Sigmoid colon (tissue), 7 donors: ENCODE measurements at regions of chr2 and their contacts with region 1.

Region 1: DNA sequence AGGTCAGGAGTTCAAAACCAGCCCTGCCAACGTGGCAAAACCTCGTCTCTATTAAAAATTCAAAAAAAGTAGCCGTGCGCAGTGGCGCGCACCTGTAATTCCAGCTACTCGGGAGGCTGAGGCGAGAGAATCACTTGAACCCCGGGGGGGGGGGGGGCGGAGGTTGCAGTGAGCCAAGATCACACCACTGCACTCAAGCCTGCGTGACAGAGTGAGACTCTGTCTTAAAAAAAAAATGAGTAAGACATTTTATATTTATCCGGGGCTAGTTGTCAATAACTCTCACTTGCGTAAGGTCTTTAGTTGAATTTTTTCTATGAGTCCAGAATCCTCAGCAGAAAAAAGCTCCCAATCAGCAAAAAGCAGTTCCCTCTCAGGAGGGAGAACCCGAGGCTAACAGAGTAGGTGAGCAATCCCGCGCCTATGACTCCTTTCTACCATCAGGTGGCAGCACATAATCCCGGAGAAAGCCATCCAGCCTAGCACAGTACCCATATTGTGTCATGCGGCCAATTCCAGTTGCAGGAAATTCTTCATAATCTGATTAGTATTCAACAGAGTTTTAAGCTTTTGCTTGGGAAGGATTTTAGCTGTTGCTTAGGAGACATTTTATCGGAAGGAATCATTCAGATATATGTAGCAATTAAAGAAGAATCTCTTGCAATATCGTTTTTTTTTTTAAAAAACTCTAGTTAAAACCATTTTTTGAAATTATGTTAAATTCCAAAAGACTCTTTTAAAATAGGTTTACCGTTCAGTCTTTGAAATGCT is 11.9 kb upstream of the CRYGA start:
- DNase-seq: peak; percentile 84
- H3K4me3 ChIP-seq: no peak overlapping the region
- H3K27ac ChIP-seq: no peak overlapping the region
- H3K4me1 ChIP-seq: peaks cover 0 to 7% (median 0%) of the 10 kb centered on the region in 4 donors
- H3K27me3 ChIP-seq: no peaks in the 10 kb centered on the region
- CTCF ChIP-seq: peak in 3 of 4 experiments; percentile 67 to 81 (median 70)
- EP300 ChIP-seq: no peak
- POLR2A ChIP-seq: no peak

Region 2: DNA sequence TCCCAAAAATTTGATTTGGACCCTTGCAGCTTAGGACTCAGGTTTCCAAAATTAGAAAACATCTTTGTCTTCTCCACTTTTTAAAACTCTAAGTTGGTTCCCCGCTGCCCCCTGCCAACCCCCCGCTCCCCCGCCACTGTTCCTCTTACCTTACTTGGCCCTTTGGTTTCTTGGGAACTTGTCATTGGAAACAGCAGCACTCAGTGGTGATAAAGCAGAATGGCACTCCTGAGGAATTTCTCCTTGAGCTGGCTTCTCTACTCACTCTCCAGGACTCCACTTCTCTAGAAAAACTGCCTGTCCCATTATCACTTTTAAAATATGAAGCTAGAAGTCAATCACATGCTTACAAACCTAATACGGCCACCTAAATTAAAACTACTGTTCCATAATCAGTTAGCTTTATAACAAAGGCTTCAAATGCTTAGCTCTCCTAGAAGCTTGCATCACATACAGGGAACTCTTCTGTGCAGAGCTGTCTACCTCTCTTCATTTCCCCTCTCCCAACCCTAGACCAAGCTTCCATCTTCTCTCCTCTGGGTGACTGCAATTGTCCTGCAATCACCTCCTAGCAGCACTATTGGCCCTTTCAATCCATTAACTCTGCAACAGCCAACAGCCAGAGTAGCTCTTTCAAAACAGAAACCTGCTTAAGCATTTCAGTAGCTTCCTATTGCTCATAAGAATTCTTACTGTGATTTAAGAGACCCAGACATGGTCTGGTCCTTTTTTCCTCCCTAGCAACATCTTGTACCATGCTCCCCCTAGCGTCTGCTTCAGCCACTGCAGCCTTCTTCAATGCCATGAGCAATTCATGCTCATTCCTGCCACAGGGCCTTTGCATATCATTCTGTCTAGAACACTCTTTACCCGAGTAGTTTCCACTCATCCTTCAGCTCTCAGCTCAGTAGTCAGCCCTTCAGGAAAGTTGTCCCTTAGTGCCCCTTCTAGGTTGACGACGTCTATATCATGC is 134.8 kb before region 1 on chr2:
- intact Hi-C with region 1: no loop called
- DNase-seq: peak; percentile 83
- H3K4me3 ChIP-seq: peak overlapping the region in 3 of 4 donors; percentile 1 to 18 (median 7)
- H3K27ac ChIP-seq: peak overlapping the region in 3 of 4 donors; percentile 67 to 77 (median 77)
- H3K4me1 ChIP-seq: peaks cover 0 to 14% (median 0%) of the 10 kb centered on the region in 4 donors
- H3K27me3 ChIP-seq: no peaks in the 10 kb centered on the region
- CTCF ChIP-seq: peak; percentile 56 to 75 (median 68)
- EP300 ChIP-seq: no peak
- POLR2A ChIP-seq: no peak

Region 3: DNA sequence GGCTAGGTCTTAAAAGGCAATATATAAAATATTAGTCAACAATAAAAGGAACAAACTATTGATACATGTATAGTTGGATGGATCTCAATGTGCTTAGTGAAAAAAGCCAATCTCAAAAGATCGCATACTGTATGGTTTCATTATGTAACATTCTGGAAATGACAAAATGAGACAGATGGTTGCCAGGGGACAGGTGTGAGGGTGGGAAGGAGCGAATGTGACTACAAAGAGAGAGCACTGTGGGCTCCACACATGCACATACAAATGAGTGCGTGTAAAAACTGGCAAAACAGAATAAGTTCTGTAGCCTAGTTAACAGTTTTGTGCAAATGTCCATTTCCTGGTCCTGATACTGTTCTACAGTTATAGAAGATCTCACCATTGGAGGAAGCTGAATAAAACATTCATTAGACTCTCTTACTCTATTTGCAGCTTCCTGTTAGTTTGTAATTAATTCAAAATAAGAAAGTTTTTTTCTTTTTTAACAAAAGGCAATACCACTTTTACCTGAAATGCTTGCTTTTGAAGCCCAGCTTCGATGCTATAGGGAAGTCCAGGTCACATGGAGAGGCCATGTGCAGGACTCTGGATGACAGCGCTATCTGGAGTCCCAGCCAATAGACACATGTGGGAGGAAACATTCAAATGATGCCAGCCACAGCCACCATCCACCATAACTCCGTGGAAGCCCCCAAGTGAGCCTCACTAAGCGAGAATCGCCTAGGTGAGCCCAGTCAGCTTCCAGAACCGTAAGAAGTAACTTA is 35.6 kb after region 1 on chr2:
- intact Hi-C with region 1: no loop called
- DNase-seq: no peak
- H3K4me3 ChIP-seq: no peak overlapping the region
- H3K27ac ChIP-seq: no peak overlapping the region
- H3K4me1 ChIP-seq: no peaks in the 10 kb centered on the region
- H3K27me3 ChIP-seq: no peaks in the 10 kb centered on the region
- CTCF ChIP-seq: no peak
- EP300 ChIP-seq: no peak
- POLR2A ChIP-seq: no peak

Region 4: GRCh38 chr2:208254871-208255556 is 79.8 kb after region 1 on chr2 and contains the start of gene IDH1:
- intact Hi-C with region 1: loop called (anchors 2 kb)
- DNase-seq: peak; percentile 97
- H3K4me3 ChIP-seq: peak within 1 kb of the TSS; percentile 66 to 78 (median 74)
- H3K27ac ChIP-seq: peak within 1 kb of the TSS; percentile 79 to 86 (median 84)
- H3K4me1 ChIP-seq: peaks cover 0 to 43% (median 22%) of the 10 kb centered on the region in 4 donors
- H3K27me3 ChIP-seq: no peaks in the 10 kb centered on the region
- CTCF ChIP-seq: peak in 2 of 4 experiments; percentile 19 to 29
- EP300 ChIP-seq: no peak
- POLR2A ChIP-seq: peak in 1 of 2 donors; percentile 46
- total RNA-seq, gene IDH1: 34.2 to 46.4 (median 37.7) TPM

Region 5: GRCh38 chr2:208359632-208359986 is 184.4 kb after region 1 on chr2:
- intact Hi-C with region 1: no loop called
- DNase-seq: no peak
- H3K4me3 ChIP-seq: no peak overlapping the region
- H3K27ac ChIP-seq: no peak overlapping the region
- H3K4me1 ChIP-seq: peaks cover 0 to 11% (median 0%) of the 10 kb centered on the region in 4 donors
- H3K27me3 ChIP-seq: no peaks in the 10 kb centered on the region
- CTCF ChIP-seq: no peak
- EP300 ChIP-seq: no peak
- POLR2A ChIP-seq: no peak